ENCODE measurements at regions of chr1 and their contacts with region 1.

Region 1: GRCh38 chr1:160006312-160006940 is 25.4 kb downstream of the PIGM start:
- DNase-seq: peak; percentile 81 to 90 (median 89)
- H3K4me3 ChIP-seq: no peak overlapping the region
- H3K27ac ChIP-seq: no peak overlapping the region
- H3K4me1 ChIP-seq: no peaks in the 10 kb centered on the region
- H3K27me3 ChIP-seq: no peaks in the 10 kb centered on the region

Region 2: GRCh38 chr1:159804924-159805323 is 201.5 kb before region 1 on chr1:
- CTCF ChIA-PET with region 1: interaction called, 37 read pairs
- POLR2A ChIA-PET with region 1: no interaction called
- DNase-seq: no peak
- H3K4me3 ChIP-seq: no peak overlapping the region
- H3K27ac ChIP-seq: no peak overlapping the region
- H3K4me1 ChIP-seq: peaks cover 0 to 11% (median 7%) of the 10 kb centered on the region in 4 experiments
- H3K27me3 ChIP-seq: peaks cover 0 to 2% (median 0%) of the 10 kb centered on the region in 5 experiments

Region 3: GRCh38 chr1:159945483-159946241 is 60.8 kb before region 1 on chr1 and contains the start of gene IGSF9:
- CTCF ChIA-PET with region 1: interaction called, 108 read pairs
- POLR2A ChIA-PET with region 1: no interaction called
- DNase-seq: peak; percentile 89 to 93 (median 92)
- H3K4me3 ChIP-seq: peak within 1 kb of the TSS; percentile 8 to 73 (median 48)
- H3K27ac ChIP-seq: no peak within 1 kb of the TSS
- H3K4me1 ChIP-seq: peaks cover 0 to 27% (median 11%) of the 10 kb centered on the region in 4 experiments
- H3K27me3 ChIP-seq: peaks cover 0 to 25% (median 0%) of the 10 kb centered on the region in 5 experiments

Region 4: DNA sequence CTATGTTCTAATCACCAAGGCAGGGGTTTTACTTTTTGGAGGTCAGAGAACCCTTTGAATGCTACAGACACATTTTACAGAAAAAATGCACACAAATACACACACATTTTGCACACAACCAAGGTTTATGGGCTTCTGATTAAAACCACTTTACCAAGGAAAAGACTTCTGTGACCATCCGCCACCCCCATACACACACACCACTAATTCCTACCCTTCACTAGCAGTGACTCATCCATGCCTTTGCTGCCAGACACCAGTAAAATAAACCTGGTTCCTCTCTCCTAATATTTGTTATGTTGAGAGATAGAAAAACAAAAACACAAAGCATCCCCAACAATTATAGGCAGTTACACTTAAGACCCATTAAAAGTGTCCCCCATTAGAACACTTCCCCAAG is 12.5 kb after region 1 on chr1:
- CTCF ChIA-PET with region 1: interaction called, 38 read pairs
- POLR2A ChIA-PET with region 1: no interaction called
- DNase-seq: peak in 1 of 3 donors; percentile 13
- H3K4me3 ChIP-seq: no peak overlapping the region
- H3K27ac ChIP-seq: no peak overlapping the region
- H3K4me1 ChIP-seq: peaks cover 0 to 11% (median 4%) of the 10 kb centered on the region in 4 experiments
- H3K27me3 ChIP-seq: peaks cover 0 to 3% (median 0%) of the 10 kb centered on the region in 5 experiments

Region 5: GRCh38 chr1:160046494-160047110 is 40.2 kb after region 1 on chr1:
- CTCF ChIA-PET with region 1: interaction called, 10 read pairs
- POLR2A ChIA-PET with region 1: no interaction called
- DNase-seq: peak; percentile 91 to 98 (median 96)
- H3K4me3 ChIP-seq: peak overlapping the region in 5 of 7 experiments; percentile 8 to 70 (median 33)
- H3K27ac ChIP-seq: no peak overlapping the region
- H3K4me1 ChIP-seq: peaks cover 5 to 25% (median 15%) of the 10 kb centered on the region in 4 experiments
- H3K27me3 ChIP-seq: peaks cover 0 to 7% (median 0%) of the 10 kb centered on the region in 5 experiments

Region 6: GRCh38 chr1:160124705-160125478 is 118.5 kb after region 1 on chr1:
- CTCF ChIA-PET with region 1: no interaction called
- POLR2A ChIA-PET with region 1: no interaction called
- DNase-seq: no peak
- H3K4me3 ChIP-seq: no peak overlapping the region
- H3K27ac ChIP-seq: no peak overlapping the region
- H3K4me1 ChIP-seq: no peaks in the 10 kb centered on the region
- H3K27me3 ChIP-seq: no peaks in the 10 kb centered on the region

Region 7: DNA sequence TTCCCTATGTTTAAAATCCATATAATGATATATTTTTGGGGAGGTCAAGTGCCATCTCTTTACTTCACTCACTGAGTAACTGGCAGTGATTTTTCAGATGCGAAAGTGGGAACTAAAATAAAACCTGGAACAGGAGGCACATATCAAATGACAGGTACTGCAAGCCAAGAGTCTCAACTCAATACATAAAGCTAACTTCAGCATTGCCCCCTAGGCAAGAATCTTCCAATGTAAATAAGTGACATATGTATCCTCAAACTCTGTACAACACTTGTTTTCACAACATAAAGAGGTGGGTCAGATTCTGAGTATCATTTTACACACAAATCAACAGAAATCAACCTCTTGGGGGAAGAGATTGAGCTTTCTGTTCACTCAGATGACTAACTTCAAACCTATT is 237.8 kb after region 1 on chr1:
- CTCF ChIA-PET with region 1: no interaction called
- POLR2A ChIA-PET with region 1: no interaction called
- DNase-seq: no peak
- H3K4me3 ChIP-seq: no peak overlapping the region
- H3K27ac ChIP-seq: peak overlapping the region in 1 of 2 experiments; percentile 44
- H3K4me1 ChIP-seq: no peaks in the 10 kb centered on the region
- H3K27me3 ChIP-seq: no peaks in the 10 kb centered on the region